ENCODE measurements at regions of chr4 and their contacts with region 1.

Region 1: GRCh38 chr4:48275247-48275646 is 5.6 kb upstream of the TEC start:
- DNase-seq: peak; percentile 33
- CTCF ChIP-seq: peak; percentile 50

Region 2: GRCh38 chr4:48127682-48128394 is 147.4 kb before region 1 on chr4:
- CTCF ChIA-PET with region 1: interaction called, 22 read pairs
- POLR2A ChIA-PET with region 1: no interaction called
- DNase-seq: peak; percentile 67
- CTCF ChIP-seq: peak; percentile 63

Region 3: GRCh38 chr4:48195374-48195773 is 79.9 kb before region 1 on chr4:
- CTCF ChIA-PET with region 1: interaction called, 10 read pairs
- POLR2A ChIA-PET with region 1: no interaction called
- DNase-seq: no peak
- CTCF ChIP-seq: no peak

Region 4: GRCh38 chr4:48262926-48263325 is 12.3 kb before region 1 on chr4:
- CTCF ChIA-PET with region 1: interaction called, 15 read pairs
- POLR2A ChIA-PET with region 1: no interaction called
- DNase-seq: no peak
- CTCF ChIP-seq: no peak

Region 5: GRCh38 chr4:48290146-48290772 is 15.0 kb after region 1 on chr4:
- CTCF ChIA-PET with region 1: interaction called, 20 read pairs
- POLR2A ChIA-PET with region 1: no interaction called
- DNase-seq: peak; percentile 53
- CTCF ChIP-seq: peak; percentile 55

Region 6: GRCh38 chr4:48340965-48341775 is 65.9 kb after region 1 on chr4 and contains the start of gene SLAIN2:
- CTCF ChIA-PET with region 1: interaction called, 10 read pairs
- POLR2A ChIA-PET with region 1: interaction called, 3 read pairs
- DNase-seq: peak; percentile 98
- CTCF ChIP-seq: no peak